Naive thymus-derived CD8-positive, alpha-beta T cell (primary cell): ENCODE measurements at regions of chr14 and their contacts with region 1.

Region 1: GRCh38 chr14:93081876-93082570 is 33.7 kb downstream of the ITPK1 start:
- DNase-seq: peak in 9 of 10 donors; percentile 29 to 81 (median 67)
- ATAC-seq: peak; percentile 82 to 90
- H3K4me3 Mint-ChIP-seq: peak overlapping the region; percentile 41 to 85 (median 74)
- H3K27ac Mint-ChIP-seq: peak overlapping the region; percentile 90 to 99 (median 96)
- H3K4me1 Mint-ChIP-seq: peaks cover 34 to 93% (median 90%) of the 10 kb centered on the region in 4 donors
- H3K27me3 Mint-ChIP-seq: no peaks in the 10 kb centered on the region

Region 2: GRCh38 chr14:93033983-93034670 is 47.9 kb before region 1 on chr14:
- POLR2A ChIA-PET with region 1: interaction called, 17 read pairs
- DNase-seq: peak; percentile 35 to 83 (median 66)
- ATAC-seq: peak; percentile 90 to 91
- H3K4me3 Mint-ChIP-seq: peak overlapping the region; percentile 67 to 90 (median 80)
- H3K27ac Mint-ChIP-seq: peak overlapping the region; percentile 86 to 95 (median 92)
- H3K4me1 Mint-ChIP-seq: peaks cover 28 to 59% (median 57%) of the 10 kb centered on the region in 4 donors
- H3K27me3 Mint-ChIP-seq: no peaks in the 10 kb centered on the region

Region 3: DNA sequence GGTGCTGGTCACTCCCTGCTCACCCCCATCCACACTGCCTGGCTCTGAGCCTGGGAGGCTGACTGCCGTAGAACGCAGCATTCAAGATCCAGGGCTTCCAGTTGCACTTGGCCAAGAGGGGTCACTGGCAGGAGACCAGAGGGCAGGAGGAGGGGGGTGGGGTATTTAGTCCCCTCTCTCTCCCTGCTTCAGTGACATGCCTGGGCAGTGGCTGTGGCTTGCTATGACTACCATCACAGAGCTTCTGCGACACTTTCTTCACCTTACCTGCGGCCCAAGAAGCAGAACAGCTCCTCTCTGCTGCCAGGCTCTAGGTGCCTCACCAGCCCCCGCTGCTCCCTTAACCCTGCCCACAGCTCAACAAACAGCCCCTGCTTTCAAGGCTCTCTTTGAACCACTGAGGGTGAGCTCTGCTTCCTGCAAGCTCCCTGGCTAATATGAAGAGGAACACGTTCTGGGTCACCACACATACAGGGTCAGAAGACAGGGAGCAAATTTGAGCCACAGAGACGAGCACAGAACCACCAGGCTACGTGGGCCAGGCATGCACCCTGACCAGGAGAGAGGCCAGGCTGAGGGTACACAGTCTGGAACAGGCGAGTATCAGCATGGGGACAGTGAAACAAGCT is 22.0 kb before region 1 on chr14:
- POLR2A ChIA-PET with region 1: interaction called, 41 read pairs
- DNase-seq: peak in 9 of 10 donors; percentile 22 to 76 (median 46)
- ATAC-seq: peak; percentile 89 to 91
- H3K4me3 Mint-ChIP-seq: peak overlapping the region; percentile 48 to 88 (median 78)
- H3K27ac Mint-ChIP-seq: peak overlapping the region; percentile 88 to 96 (median 94)
- H3K4me1 Mint-ChIP-seq: peaks cover 47 to 81% (median 76%) of the 10 kb centered on the region in 4 donors
- H3K27me3 Mint-ChIP-seq: no peaks in the 10 kb centered on the region